Activated CD8-positive, alpha-beta T cell treated with anti-CD3 and anti-CD28 coated beads, Interleukin-2, amount 10 ng/mL, durations not matched to agents 7 days and 5 days (primary cell): ENCODE measurements at regions of chr17 and their contacts with region 1.

Region 1: GRCh38 chr17:30824356-30825145 is at the start of gene CRLF3:
- DNase-seq: peak; percentile 92
- ATAC-seq: peak; percentile 92
- H3K4me3 Mint-ChIP-seq: peak within 1 kb of the TSS; percentile 89
- H3K27ac Mint-ChIP-seq: peak within 1 kb of the TSS; percentile 93
- H3K4me1 Mint-ChIP-seq: peaks cover 41% of the 10 kb centered on the region
- H3K27me3 Mint-ChIP-seq: no peaks in the 10 kb centered on the region
- total RNA-seq, gene CRLF3: 61.4 to 65.6 TPM

Region 2: DNA sequence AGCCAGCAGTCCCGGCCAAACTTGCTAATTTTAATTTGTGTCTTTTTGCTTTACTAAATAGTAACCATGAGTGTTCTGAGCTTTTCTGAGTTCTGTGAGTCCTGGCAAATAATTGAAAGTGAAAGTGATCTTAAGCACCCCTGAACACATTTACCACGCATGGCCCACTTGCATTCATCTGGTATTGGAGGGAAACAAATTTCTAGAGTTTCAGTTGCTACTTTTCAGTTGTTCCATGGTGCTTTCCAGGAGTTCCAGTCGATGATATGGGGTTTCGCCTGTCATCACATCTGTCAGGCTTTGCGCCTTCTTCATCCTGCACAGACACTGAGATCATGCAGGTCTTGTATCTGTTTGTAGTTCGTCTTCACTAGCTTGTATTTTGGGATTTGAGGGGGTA is 44.2 kb before region 1 on chr17:
- CTCF ChIA-PET with region 1: interaction called, 26 read pairs
- POLR2A ChIA-PET with region 1: interaction called, 3 read pairs
- DNase-seq: peak; percentile 50
- ATAC-seq: peak; percentile 75
- H3K4me3 Mint-ChIP-seq: peak overlapping the region; percentile 53
- H3K27ac Mint-ChIP-seq: peak overlapping the region; percentile 85
- H3K4me1 Mint-ChIP-seq: peaks cover 17% of the 10 kb centered on the region
- H3K27me3 Mint-ChIP-seq: no peaks in the 10 kb centered on the region

Region 3: GRCh38 chr17:30788918-30789317 is 35.6 kb before region 1 on chr17:
- CTCF ChIA-PET with region 1: interaction called, 33 read pairs
- POLR2A ChIA-PET with region 1: interaction called, 3 read pairs
- DNase-seq: peak; percentile 16
- ATAC-seq: no peak
- H3K4me3 Mint-ChIP-seq: no peak overlapping the region
- H3K27ac Mint-ChIP-seq: no peak overlapping the region
- H3K4me1 Mint-ChIP-seq: peaks cover 8% of the 10 kb centered on the region
- H3K27me3 Mint-ChIP-seq: no peaks in the 10 kb centered on the region

Region 4: GRCh38 chr17:30796016-30796415 is 28.5 kb before region 1 on chr17:
- CTCF ChIA-PET with region 1: interaction called, 33 read pairs
- POLR2A ChIA-PET with region 1: interaction called, 6 read pairs
- DNase-seq: peak; percentile 18
- ATAC-seq: no peak
- H3K4me3 Mint-ChIP-seq: no peak overlapping the region
- H3K27ac Mint-ChIP-seq: no peak overlapping the region
- H3K4me1 Mint-ChIP-seq: peaks cover 8% of the 10 kb centered on the region
- H3K27me3 Mint-ChIP-seq: no peaks in the 10 kb centered on the region

Region 5: DNA sequence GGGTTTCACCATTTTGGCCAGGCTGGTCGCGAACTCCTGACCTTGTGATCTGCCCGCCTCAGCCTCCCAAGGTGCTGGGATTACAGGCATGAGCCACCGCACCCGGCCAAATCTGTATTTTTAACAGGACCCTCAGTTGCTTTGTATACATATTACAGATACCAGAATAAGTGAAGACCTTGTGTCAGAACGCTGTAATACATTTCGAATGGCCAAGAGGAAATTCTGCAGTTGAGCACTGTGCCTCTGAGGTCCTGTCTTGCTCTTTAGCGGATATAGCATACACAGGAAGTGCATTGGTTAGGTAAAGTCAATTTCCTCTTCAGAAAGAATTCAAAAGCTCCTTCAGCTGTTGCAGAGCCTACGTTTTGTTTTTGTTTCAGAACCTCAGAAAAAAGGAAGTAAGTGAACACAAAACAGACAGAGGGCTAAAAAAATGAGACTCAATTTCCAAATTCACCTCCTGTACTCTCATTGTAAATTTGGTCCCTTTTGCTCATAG is 15.7 kb before region 1 on chr17:
- CTCF ChIA-PET with region 1: interaction called, 316 read pairs
- POLR2A ChIA-PET with region 1: interaction called, 218 read pairs
- DNase-seq: peak; percentile 74
- ATAC-seq: peak; percentile 92
- H3K4me3 Mint-ChIP-seq: peak overlapping the region; percentile 85
- H3K27ac Mint-ChIP-seq: peak overlapping the region; percentile 99
- H3K4me1 Mint-ChIP-seq: peaks cover 64% of the 10 kb centered on the region
- H3K27me3 Mint-ChIP-seq: no peaks in the 10 kb centered on the region

Region 6: DNA sequence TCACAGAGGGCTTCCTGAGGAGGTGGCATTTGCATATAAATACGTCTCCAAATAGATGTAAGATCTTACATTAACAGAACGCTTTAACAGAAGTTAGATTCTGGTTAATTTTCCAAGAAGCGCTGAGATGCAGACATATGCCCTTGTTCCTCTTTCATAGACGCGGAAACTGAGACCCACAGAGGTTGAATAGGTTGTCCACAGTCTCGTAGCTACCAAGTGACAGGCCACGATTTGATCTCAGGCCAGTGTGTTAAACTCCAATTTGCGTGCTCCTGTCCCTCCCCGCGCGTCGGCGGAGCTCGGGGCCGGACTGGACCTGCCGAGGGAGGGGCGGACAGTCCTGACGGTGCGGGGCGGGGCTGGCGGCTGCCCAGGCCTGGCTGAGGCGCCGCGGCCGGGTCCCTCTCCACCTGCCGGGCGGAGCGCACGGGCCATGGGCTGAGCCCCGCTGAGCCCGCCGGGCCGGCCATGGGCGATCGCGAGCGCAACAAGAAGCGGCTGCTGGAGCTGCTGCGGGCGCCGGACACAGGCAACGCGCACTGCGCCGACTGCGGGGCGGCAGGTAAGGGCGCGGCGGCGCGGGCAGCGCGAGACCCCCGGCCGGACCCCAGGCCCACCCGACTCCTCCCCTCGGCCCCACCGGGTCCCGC is 97.1 kb after region 1 on chr17 and contains the start of gene ADAP2:
- CTCF ChIA-PET with region 1: no interaction called
- POLR2A ChIA-PET with region 1: no interaction called
- DNase-seq: no peak
- ATAC-seq: peak; percentile 58
- H3K4me3 Mint-ChIP-seq: peak within 1 kb of the TSS; percentile 48
- H3K27ac Mint-ChIP-seq: no peak within 1 kb of the TSS
- H3K4me1 Mint-ChIP-seq: peaks cover 14% of the 10 kb centered on the region
- H3K27me3 Mint-ChIP-seq: peaks cover 44% of the 10 kb centered on the region
- total RNA-seq, gene ADAP2: 0.39 to 1.1 TPM